Panc1 (cell line): ENCODE measurements at regions of chr4 and their contacts with region 1.

Region 1: GRCh38 chr4:173088144-173088543 is 80.5 kb upstream of the GALNT7 start:
- DNase-seq: no peak
- ATAC-seq: no peak
- H3K4me3 ChIP-seq: no peak overlapping the region
- H3K27ac ChIP-seq: no peak overlapping the region
- H3K4me1 ChIP-seq: no peaks in the 10 kb centered on the region
- H3K27me3 ChIP-seq: no peaks in the 10 kb centered on the region
- CTCF ChIP-seq: no peak

Region 2: DNA sequence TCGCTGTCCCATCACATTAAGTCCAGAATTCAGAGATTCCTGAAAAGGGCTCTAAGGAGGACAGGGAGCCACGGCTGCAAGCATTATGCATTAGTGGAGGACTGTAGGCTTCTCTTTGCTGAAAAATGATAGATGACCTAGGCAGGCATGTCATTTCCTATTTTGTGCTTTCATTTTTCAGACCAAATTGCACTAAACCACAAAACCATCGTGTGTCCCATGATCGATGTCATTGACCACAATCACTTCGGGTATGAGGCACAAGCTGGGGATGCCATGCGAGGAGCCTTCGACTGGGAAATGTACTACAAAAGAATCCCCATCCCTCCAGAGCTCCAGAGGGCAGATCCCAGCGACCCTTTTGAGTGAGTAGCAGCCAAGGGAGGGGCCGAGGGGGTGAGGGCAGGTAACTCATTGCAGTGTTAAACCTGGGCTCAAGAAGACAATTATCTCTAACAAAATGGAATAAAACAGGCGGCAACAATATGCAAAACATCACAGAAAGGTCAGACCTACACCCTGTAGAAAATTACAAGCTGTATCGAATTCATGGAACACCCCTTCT is 274.7 kb before region 1 on chr4:
- CTCF ChIA-PET with region 1: no interaction called
- POLR2A ChIA-PET with region 1: no interaction called
- in situ Hi-C with region 1: no loop called
- intact Hi-C with region 1: no loop called
- DNase-seq: no peak
- ATAC-seq: no peak
- H3K4me3 ChIP-seq: no peak overlapping the region
- H3K27ac ChIP-seq: no peak overlapping the region
- H3K4me1 ChIP-seq: no peaks in the 10 kb centered on the region
- H3K27me3 ChIP-seq: no peaks in the 10 kb centered on the region; the same call in 1 of the 2 replicates
- CTCF ChIP-seq: no peak

Region 3: DNA sequence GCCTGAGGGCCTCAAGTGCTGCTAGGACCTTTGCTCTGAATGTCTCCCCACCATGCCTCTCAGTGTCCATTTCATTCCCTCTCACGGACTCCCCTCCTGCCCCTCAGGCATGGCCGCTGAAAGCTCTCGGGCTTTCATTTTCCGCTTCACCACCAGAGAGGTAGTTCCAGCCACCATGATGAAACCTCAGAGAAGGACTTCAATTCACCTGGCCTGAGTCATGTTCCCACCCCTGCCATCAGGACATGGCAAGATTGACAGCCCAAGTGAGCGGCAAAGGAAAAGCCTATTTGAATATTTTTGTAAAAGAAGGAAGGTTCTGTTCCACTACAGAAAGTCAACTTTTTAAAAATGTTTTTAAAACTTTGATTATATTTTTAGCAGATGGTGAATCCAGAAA is 168.9 kb before region 1 on chr4:
- CTCF ChIA-PET with region 1: no interaction called
- POLR2A ChIA-PET with region 1: no interaction called
- in situ Hi-C with region 1: no loop called
- intact Hi-C with region 1: no loop called
- DNase-seq: no peak
- ATAC-seq: no peak
- H3K4me3 ChIP-seq: no peak overlapping the region
- H3K27ac ChIP-seq: no peak overlapping the region
- H3K4me1 ChIP-seq: no peaks in the 10 kb centered on the region
- H3K27me3 ChIP-seq: no peaks in the 10 kb centered on the region
- CTCF ChIP-seq: no peak

Region 4: DNA sequence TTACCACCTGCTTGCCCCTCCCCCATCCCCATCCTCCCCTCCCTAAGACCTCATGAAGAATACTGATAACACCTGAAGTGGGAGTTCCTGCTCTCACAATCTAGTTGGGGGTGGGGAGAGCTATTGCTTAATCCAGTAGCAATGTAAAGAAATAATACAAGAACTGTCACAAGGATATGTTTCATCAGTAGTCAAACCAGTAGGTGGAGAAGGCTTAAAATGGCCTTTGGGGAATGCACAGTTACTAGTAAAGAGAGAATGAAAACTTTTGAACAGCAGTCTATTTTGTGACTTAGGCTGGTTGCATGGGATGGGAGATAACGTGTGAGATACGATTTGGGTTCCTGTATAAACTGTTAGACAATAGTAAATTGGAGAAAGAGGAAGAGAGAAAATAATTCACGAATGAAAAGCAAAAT is 86.5 kb after region 1 on chr4:
- CTCF ChIA-PET with region 1: no interaction called
- POLR2A ChIA-PET with region 1: interaction called, 11 read pairs
- in situ Hi-C with region 1: no loop called
- intact Hi-C with region 1: no loop called
- DNase-seq: no peak
- ATAC-seq: no peak
- H3K4me3 ChIP-seq: no peak overlapping the region
- H3K27ac ChIP-seq: peak overlapping the region; percentile 98
- H3K4me1 ChIP-seq: peaks cover 83% of the 10 kb centered on the region
- H3K27me3 ChIP-seq: no peaks in the 10 kb centered on the region
- CTCF ChIP-seq: no peak

Region 5: GRCh38 chr4:173243917-173244658 is 155.9 kb after region 1 on chr4:
- CTCF ChIA-PET with region 1: no interaction called
- POLR2A ChIA-PET with region 1: no interaction called
- in situ Hi-C with region 1: no loop called
- intact Hi-C with region 1: no loop called
- DNase-seq: no peak
- ATAC-seq: 0 out of 2 replicates have a peak, but pooled peaks have one; percentile 43
- H3K4me3 ChIP-seq: no peak overlapping the region
- H3K27ac ChIP-seq: peak overlapping the region; percentile 92
- H3K4me1 ChIP-seq: peaks cover 74% of the 10 kb centered on the region
- H3K27me3 ChIP-seq: no peaks in the 10 kb centered on the region
- CTCF ChIP-seq: no peak